Activated CD4-positive, alpha-beta memory T cell treated with anti-CD3 and anti-CD28 coated beads for 36 hours (primary cell): ENCODE measurements at regions of chr1 and their contacts with region 1.

Region 1: DNA sequence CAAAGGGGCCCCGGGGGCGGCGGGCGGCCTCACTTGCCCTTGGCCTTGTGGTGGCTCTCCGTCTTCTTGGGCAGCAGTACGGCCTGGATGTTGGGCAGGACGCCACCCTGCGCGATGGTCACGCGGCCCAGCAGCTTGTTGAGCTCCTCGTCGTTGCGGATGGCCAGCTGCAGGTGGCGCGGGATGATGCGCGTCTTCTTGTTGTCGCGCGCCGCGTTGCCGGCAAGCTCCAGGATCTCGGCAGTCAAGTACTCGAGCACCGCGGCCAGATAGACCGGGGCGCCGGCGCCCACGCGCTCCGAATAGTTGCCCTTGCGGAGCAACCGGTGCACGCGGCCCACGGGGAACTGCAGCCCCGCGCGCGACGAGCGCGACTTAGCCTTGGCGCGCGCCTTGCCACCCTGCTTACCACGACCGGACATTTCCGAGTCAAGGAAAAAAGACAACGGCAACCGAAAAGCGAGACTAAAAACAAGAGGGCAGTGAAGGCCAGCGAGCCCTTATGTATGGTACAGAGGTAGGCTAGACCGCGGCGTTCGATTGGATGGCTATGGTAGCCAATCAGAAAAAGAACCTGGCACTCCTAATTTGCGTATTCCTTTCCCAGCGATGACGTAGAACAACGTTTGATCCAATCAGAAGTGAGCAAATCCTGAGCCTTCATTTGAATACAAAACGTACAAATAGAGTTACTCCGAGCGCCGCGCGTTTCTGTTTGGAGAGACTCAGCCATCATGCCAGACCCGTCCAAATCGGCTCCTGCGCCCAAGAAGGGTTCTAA is 29.6 kb upstream of the RNF187 start:
- DNase-seq: peak; percentile 92
- H3K4me3 Mint-ChIP-seq: peak overlapping the region; percentile 98
- H3K27ac Mint-ChIP-seq: peak overlapping the region; percentile 94
- H3K4me1 Mint-ChIP-seq: peaks cover 38% of the 10 kb centered on the region
- H3K27me3 Mint-ChIP-seq: peaks cover 1% of the 10 kb centered on the region

Region 2: GRCh38 chr1:228139944-228140656 is 317.5 kb before region 1 on chr1 and contains the start of gene GUK1:
- CTCF ChIA-PET with region 1: no interaction called
- POLR2A ChIA-PET with region 1: no interaction called
- intact Hi-C with region 1: loop called (anchors 2 kb)
- DNase-seq: peak; percentile 100
- H3K4me3 Mint-ChIP-seq: peak within 1 kb of the TSS; percentile 99
- H3K27ac Mint-ChIP-seq: peak within 1 kb of the TSS; percentile 96
- H3K4me1 Mint-ChIP-seq: peaks cover 27% of the 10 kb centered on the region
- H3K27me3 Mint-ChIP-seq: peaks cover 2% of the 10 kb centered on the region
- total RNA-seq, gene GUK1: 229 to 239 TPM

Region 3: GRCh38 chr1:228405987-228406265 is 51.7 kb before region 1 on chr1:
- CTCF ChIA-PET with region 1: interaction called, 7 read pairs
- POLR2A ChIA-PET with region 1: interaction called, 33 read pairs
- intact Hi-C with region 1: loop called (anchors 1 kb)
- DNase-seq: no peak
- H3K4me3 Mint-ChIP-seq: peak overlapping the region; percentile 83
- H3K27ac Mint-ChIP-seq: peak overlapping the region; percentile 71
- H3K4me1 Mint-ChIP-seq: peaks cover 43% of the 10 kb centered on the region
- H3K27me3 Mint-ChIP-seq: no peaks in the 10 kb centered on the region

Region 4: GRCh38 chr1:228445843-228446650 is 11.5 kb before region 1 on chr1:
- CTCF ChIA-PET with region 1: interaction called, 7 read pairs
- POLR2A ChIA-PET with region 1: interaction called, 10 read pairs
- intact Hi-C with region 1: no loop called
- DNase-seq: peak; percentile 67
- H3K4me3 Mint-ChIP-seq: peak overlapping the region; percentile 72
- H3K27ac Mint-ChIP-seq: no peak overlapping the region
- H3K4me1 Mint-ChIP-seq: peaks cover 9% of the 10 kb centered on the region
- H3K27me3 Mint-ChIP-seq: peaks cover 35% of the 10 kb centered on the region

Region 5: GRCh38 chr1:228486596-228487335 is 29.2 kb after region 1 on chr1:
- CTCF ChIA-PET with region 1: interaction called, 22 read pairs
- POLR2A ChIA-PET with region 1: interaction called, 20 read pairs
- intact Hi-C with region 1: loop called (anchors 1 kb)
- DNase-seq: peak; percentile 85
- H3K4me3 Mint-ChIP-seq: peak overlapping the region; percentile 96
- H3K27ac Mint-ChIP-seq: peak overlapping the region; percentile 99
- H3K4me1 Mint-ChIP-seq: peaks cover 41% of the 10 kb centered on the region
- H3K27me3 Mint-ChIP-seq: no peaks in the 10 kb centered on the region